ENCODE measurements at regions of chr16 and their contacts with region 1.

Region 1: GRCh38 chr16:87895641-87896141 is 26.4 kb upstream of the SLC7A5 start:
- DNase-seq: peak; percentile 98
- ATAC-seq: peak; percentile 87
- H3K4me3 Mint-ChIP-seq: peak overlapping the region; percentile 37
- H3K27ac Mint-ChIP-seq: peak overlapping the region; percentile 97
- H3K4me1 Mint-ChIP-seq: peaks cover 47% of the 10 kb centered on the region
- H3K27me3 Mint-ChIP-seq: no peaks in the 10 kb centered on the region
- CTCF ChIP-seq: no peak

Region 2: DNA sequence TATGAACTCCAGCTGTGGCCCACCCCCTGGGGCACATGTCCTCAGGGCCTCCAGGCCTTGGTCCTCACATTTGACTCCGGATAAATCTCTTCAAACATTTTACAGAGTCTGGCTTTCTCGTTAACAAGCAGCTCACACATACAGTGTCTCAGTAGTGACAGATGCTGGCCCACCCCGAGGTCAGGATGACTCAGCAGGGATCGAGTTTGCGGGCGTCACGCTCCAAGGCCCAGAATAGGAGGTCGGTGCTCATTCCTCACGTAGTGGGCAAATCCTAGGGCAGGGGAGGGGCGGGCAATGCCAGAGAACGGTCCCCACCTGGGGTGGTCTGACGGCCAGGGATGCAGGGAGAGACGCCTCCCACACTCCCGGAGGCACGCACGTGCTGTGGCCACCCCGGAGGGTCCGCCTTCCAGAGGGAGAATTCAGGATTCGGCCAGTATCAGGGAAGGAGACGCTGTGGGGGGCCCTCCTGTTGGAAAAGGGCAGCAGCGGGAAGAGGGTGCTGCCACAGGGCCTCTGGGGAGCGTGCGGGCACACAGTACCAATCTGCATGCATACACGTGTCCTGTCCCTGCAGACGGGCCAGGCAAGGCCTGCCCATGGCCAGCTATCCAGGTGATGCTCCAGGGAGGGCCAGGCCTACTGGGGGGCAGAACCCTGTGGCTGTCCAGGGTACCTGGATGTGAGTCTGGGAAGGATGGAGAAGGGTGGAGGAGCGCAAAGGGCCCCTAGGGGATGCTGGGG is 35.0 kb before region 1 on chr16:
- CTCF ChIA-PET with region 1: no interaction called
- POLR2A ChIA-PET with region 1: interaction called, 75 read pairs
- intact Hi-C with region 1: no loop called
- DNase-seq: no peak
- ATAC-seq: peak; percentile 17
- H3K4me3 Mint-ChIP-seq: peak overlapping the region; percentile 56
- H3K27ac Mint-ChIP-seq: peak overlapping the region; percentile 82
- H3K4me1 Mint-ChIP-seq: peaks cover 76% of the 10 kb centered on the region
- H3K27me3 Mint-ChIP-seq: no peaks in the 10 kb centered on the region
- CTCF ChIP-seq: no peak

Region 3: GRCh38 chr16:87877938-87878507 is 17.7 kb before region 1 on chr16:
- CTCF ChIA-PET with region 1: interaction called, 55 read pairs
- POLR2A ChIA-PET with region 1: interaction called, 37 read pairs
- intact Hi-C with region 1: loop called (anchors 1 kb)
- DNase-seq: peak; percentile 71
- ATAC-seq: peak; percentile 17
- H3K4me3 Mint-ChIP-seq: no peak overlapping the region
- H3K27ac Mint-ChIP-seq: no peak overlapping the region
- H3K4me1 Mint-ChIP-seq: peaks cover 50% of the 10 kb centered on the region
- H3K27me3 Mint-ChIP-seq: peaks cover 4% of the 10 kb centered on the region
- CTCF ChIP-seq: peak; percentile 55

Region 4: DNA sequence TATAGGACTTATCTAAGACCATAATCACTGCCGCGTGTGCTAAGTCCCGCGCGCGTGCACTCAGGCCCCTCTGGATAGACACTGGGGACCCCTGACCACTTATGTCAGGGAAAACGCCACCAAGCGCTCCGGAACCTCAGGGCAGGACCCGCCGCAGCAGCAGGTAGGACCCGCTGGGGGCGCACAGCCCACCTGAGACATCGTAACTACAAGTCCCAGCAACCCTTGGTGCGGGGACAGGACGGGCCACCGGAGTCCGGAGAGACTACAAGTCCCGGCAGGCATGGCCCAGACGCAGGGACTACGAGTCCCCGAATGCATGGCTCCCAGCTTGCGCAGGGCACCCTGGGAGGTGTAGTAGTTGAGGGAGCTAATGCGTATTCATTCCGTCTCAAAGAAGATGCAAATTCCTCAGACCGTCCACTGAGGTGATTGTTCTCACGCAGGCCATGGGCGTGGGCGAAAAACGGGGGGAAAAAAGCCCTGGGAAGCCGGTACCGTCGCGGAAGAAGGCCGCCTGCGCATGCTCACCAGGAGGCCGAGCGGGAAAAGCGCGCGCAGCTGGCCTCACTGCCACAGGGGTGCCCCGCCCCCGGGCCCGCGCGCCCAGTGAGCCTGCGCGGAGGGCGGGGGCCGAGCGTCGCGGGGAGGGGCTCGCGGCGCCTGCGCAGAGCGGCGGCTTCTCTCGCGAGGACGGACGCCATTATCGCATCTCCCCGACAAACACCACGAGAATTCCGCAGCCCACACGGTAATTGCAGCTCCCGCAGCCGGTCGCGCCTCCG is 55.3 kb after region 1 on chr16 and contains the start of gene BANP:
- CTCF ChIA-PET with region 1: interaction called, 3 read pairs
- POLR2A ChIA-PET with region 1: interaction called, 10 read pairs
- intact Hi-C with region 1: no loop called
- DNase-seq: peak; percentile 99
- ATAC-seq: peak; percentile 95
- H3K4me3 Mint-ChIP-seq: peak within 1 kb of the TSS; percentile 88
- H3K27ac Mint-ChIP-seq: peak within 1 kb of the TSS; percentile 99
- H3K4me1 Mint-ChIP-seq: peaks cover 51% of the 10 kb centered on the region
- H3K27me3 Mint-ChIP-seq: no peaks in the 10 kb centered on the region
- CTCF ChIP-seq: peak; percentile 73
- total RNA-seq, gene BANP: 32.1 to 36.1 TPM

Measured in activated CD8-positive, alpha-beta T cell treated with anti-CD3 and anti-CD28 coated beads for 36 hours (primary cell).